ENCODE measurements at regions of chr4 and their contacts with region 1.

Region 1: DNA sequence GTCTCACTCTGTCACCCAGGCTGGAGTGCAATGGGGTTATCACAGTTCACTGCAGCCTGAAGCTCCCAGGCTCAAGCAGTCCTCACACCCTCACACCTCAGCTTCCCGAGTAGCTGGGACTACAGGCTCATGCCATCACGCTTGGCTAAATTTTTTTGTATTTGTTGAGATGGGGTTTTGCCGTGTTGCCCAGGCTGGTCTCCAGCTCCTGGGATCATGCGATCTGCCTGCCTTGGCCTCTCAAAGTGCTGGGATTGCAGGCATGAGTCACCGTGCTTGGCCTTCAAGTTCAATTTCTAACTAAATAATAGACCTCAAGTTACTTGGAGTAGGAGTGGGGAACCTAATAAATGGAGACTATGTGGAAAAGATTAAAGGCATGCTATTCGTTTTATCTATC is 48.9 kb downstream of the MND1 start:
- DNase-seq: peak; percentile 50
- H3K4me3 ChIP-seq: no peak overlapping the region
- H3K27ac ChIP-seq: no peak overlapping the region
- H3K27me3 ChIP-seq: no peaks in the 10 kb centered on the region
- CTCF ChIP-seq: no peak

Region 2: DNA sequence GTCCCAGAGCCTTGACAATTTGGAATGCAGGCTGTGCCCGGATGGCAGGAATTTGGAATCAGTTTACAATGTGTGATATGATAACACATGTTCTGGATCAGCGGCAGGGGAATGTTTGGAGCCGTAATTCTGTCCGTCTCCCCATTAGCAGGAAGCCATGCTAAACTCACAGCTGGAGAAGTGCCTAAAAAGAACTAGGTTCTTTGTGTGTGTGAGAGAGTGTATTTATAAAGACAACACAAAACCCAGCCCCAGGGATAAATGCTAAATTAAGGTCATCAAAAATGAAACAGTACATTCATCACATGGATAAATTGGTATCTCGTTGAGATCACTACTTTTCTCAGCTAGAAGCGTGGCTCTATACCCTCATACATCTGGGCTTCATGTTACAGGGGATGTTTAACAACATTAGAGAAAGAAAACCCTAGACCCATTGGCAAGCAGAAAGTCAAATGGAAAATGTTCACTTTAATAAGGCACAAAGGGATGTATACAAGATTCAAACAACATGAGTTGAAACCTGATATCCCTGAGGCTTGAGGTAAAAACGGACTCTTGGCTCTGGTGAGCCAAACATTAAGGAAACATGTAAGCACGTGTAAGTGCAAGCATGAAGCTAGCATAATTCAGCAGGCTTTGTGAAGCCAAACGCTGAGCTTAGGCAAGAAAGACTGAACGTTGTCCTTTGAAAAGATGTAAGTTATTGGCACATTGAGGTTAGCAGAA is 54.8 kb after region 1 on chr4:
- CTCF ChIA-PET with region 1: interaction called, 10 read pairs
- POLR2A ChIA-PET with region 1: interaction called, 3 read pairs
- DNase-seq: peak; percentile 56
- H3K4me3 ChIP-seq: no peak overlapping the region
- H3K27ac ChIP-seq: no peak overlapping the region
- H3K27me3 ChIP-seq: no peaks in the 10 kb centered on the region
- CTCF ChIP-seq: no peak

Region 3: DNA sequence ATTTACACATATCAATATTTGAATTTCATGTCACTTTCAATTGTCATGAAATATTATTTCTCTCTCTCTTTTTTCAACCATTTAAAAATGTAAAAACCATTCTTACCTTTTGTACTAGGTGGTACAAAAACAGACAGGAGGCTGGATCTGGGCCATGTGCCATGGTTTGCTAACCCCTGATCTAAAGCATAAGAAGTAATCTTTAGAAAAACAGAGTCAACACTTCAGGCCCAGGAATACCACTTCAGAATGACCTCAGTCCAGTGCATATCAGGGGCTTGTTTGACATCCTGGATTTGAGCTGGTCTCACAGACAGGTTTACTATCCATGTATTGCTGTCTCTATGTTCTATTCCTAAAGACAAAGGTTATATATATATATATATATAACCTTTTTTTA is 995.8 kb after region 1 on chr4:
- CTCF ChIA-PET with region 1: no interaction called
- POLR2A ChIA-PET with region 1: no interaction called
- DNase-seq: no peak
- H3K4me3 ChIP-seq: no peak overlapping the region
- H3K27ac ChIP-seq: no peak overlapping the region
- H3K27me3 ChIP-seq: no peaks in the 10 kb centered on the region
- CTCF ChIP-seq: no peak